ENCODE measurements at regions of chr22 and their contacts with region 1.

Region 1: DNA sequence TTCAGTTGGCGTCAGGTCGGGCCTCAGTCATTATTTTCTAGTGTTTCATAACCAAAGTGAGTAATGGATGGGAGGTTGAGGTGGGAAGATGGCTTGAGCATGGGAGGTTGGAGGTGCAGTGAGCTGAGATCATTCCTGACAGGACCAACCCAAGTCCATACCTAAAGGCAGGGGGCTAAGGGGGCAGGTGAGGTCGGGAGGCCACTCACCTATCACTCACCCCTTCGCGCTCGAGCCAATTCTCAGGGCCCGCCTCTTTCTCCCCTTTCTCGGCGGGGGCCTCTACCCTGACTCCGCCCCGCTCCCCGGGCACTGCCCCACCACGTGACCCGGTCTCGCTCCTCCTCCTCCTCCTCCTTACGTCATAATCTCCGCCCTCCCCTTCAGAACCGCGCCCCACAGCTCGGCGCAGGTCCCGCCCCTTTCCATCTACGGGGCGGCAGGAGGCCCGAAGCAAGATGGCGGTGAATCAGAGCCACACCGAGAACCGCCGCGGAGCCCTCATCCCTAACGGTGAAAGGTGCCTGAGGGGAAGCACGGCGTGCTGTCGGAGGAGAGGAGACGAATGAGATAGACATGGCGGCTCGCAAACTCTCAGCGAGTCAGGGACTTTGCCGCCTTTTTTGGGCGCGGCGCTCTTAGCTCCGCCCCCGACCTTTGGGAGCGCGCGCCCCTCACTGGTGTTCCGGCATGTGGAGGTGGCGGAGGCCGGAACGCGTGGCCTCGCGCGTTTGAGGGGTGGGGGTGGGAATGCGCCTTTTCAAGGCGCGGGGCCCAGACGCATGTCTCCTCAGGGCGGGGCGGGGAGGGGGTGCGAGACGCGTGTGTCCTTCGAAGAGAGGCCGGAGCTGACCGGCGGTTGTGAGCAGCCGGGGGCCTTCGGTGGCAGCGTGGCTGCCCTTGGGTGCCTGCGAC is at the start of gene WBP2NL:
- DNase-seq: peak; percentile 75 to 92 (median 89)
- ATAC-seq: peak; percentile 99
- H3K4me3 ChIP-seq: peak within 1 kb of the TSS; percentile 76
- H3K4me3 Mint-ChIP-seq: peak within 1 kb of the TSS; percentile 91 to 100 (median 96)
- H3K27ac ChIP-seq: peak within 1 kb of the TSS; percentile 73
- H3K27ac Mint-ChIP-seq: peak within 1 kb of the TSS; percentile 91 to 99 (median 96)
- H3K4me1 ChIP-seq: peaks cover 6 to 7% of the 10 kb centered on the region in 2 donors
- H3K4me1 Mint-ChIP-seq: peaks cover 12 to 31% (median 22%) of the 10 kb centered on the region in 7 donors
- H3K27me3 ChIP-seq: no peaks in the 10 kb centered on the region
- H3K27me3 Mint-ChIP-seq: peaks cover 0 to 9% (median 0%) of the 10 kb centered on the region in 5 donors
- total RNA-seq, gene WBP2NL: 0.85 to 5.7 (median 3.2) TPM

Region 2: GRCh38 chr22:41946629-41947423 is 51.8 kb before region 1 on chr22 and contains the start of gene CENPM:
- CTCF ChIA-PET with region 1: interaction called, 3 read pairs
- POLR2A ChIA-PET with region 1: interaction called, 3 read pairs
- intact Hi-C with region 1: loop called in 1 of 2 experiments (anchors 2 kb)
- DNase-seq: peak; percentile 71 to 94 (median 84)
- ATAC-seq: peak; percentile 97
- H3K4me3 ChIP-seq: peak within 1 kb of the TSS; percentile 82
- H3K4me3 Mint-ChIP-seq: peak within 1 kb of the TSS; percentile 83 to 93 (median 91)
- H3K27ac ChIP-seq: peak within 1 kb of the TSS; percentile 37
- H3K27ac Mint-ChIP-seq: peak within 1 kb of the TSS in 7 of 9 donors; percentile 63 to 93 (median 68)
- H3K4me1 ChIP-seq: peaks cover 3 to 13% of the 10 kb centered on the region in 2 donors
- H3K4me1 Mint-ChIP-seq: peaks cover 0 to 41% (median 10%) of the 10 kb centered on the region in 7 donors
- H3K27me3 ChIP-seq: no peaks in the 10 kb centered on the region
- H3K27me3 Mint-ChIP-seq: no peaks in the 10 kb centered on the region
- total RNA-seq, gene CENPM: 5.1 to 51.1 (median 10.8) TPM

Region 3: GRCh38 chr22:41976401-41976901 is 22.2 kb before region 1 on chr22:
- CTCF ChIA-PET with region 1: no interaction called
- POLR2A ChIA-PET with region 1: no interaction called
- intact Hi-C with region 1: loop called in 1 of 2 experiments (anchors 2 kb)
- DNase-seq: peak in 6 of 9 donors; percentile 18 to 80 (median 34)
- ATAC-seq: peak; percentile 83
- H3K4me3 ChIP-seq: peak overlapping the region; percentile 33
- H3K4me3 Mint-ChIP-seq: peak overlapping the region; percentile 57 to 81 (median 76)
- H3K27ac ChIP-seq: no peak overlapping the region
- H3K27ac Mint-ChIP-seq: no peak overlapping the region
- H3K4me1 ChIP-seq: peaks cover 0 to 3% of the 10 kb centered on the region in 2 donors
- H3K4me1 Mint-ChIP-seq: peaks cover 1 to 14% (median 5%) of the 10 kb centered on the region in 7 donors
- H3K27me3 ChIP-seq: no peaks in the 10 kb centered on the region
- H3K27me3 Mint-ChIP-seq: peaks cover 18 to 54% (median 34%) of the 10 kb centered on the region in 5 donors

Region 4: GRCh38 chr22:42033263-42034181 is 34.9 kb after region 1 on chr22:
- CTCF ChIA-PET with region 1: no interaction called
- POLR2A ChIA-PET with region 1: interaction called, 4 read pairs
- intact Hi-C with region 1: loop called in 1 of 2 experiments (anchors 2 kb)
- DNase-seq: no peak
- ATAC-seq: no peak
- H3K4me3 ChIP-seq: no peak overlapping the region
- H3K4me3 Mint-ChIP-seq: no peak overlapping the region
- H3K27ac ChIP-seq: no peak overlapping the region
- H3K27ac Mint-ChIP-seq: peak overlapping the region in 1 of 9 donors; percentile 43
- H3K4me1 ChIP-seq: no peaks in the 10 kb centered on the region
- H3K4me1 Mint-ChIP-seq: peaks cover 0 to 27% (median 0%) of the 10 kb centered on the region in 7 donors
- H3K27me3 ChIP-seq: no peaks in the 10 kb centered on the region
- H3K27me3 Mint-ChIP-seq: peaks cover 0 to 3% (median 0%) of the 10 kb centered on the region in 5 donors

Region 5: DNA sequence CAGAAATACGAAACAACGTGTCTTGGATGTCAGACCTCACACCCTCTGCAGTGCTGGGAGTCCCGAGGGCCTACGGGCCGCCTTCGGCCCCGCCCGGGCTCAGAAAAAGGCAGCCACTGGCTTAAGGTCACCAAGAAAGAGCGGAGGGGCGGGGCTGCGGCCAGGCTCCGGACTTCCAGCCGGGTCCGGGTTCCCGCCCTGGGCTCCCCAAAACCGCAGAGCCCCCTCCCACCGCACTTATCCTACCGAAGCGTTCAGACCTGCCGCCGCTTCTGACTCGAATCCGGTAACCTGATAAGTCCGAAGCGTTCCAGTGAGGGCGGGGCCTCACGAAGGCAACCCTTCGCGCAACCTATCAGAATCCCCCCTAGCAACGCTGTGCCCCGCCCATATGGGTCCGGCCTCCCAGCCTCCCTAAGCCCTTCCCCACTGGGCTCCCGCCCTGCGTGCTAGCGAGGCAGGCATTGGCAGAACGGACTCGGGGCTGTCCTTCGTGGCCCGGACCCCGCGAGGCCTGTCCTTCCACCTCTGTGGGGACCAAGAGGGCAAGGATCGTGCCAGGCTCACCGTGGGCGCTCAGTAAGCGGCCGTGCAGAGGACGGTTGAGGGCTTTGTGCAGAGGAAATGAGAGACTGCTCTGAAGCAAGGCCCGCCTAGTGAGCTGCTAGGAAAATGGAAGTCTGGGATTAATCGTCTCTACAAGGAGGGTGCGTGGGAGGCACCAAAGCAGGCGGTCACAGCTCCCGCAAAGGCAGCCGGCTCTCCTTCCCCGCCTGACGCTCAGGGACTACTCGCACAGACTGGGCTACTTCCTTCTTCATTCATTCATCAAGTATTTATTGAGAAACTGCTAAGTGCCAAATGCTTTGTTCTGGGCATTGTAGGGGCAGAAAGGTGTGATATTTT is 72.2 kb after region 1 on chr22 and contains the start of gene NAGA:
- CTCF ChIA-PET with region 1: no interaction called
- POLR2A ChIA-PET with region 1: interaction called, 8 read pairs
- intact Hi-C with region 1: loop called (anchors 1 kb)
- DNase-seq: peak; percentile 79 to 91 (median 88)
- ATAC-seq: peak; percentile 99
- H3K4me3 ChIP-seq: peak within 1 kb of the TSS; percentile 75
- H3K4me3 Mint-ChIP-seq: peak within 1 kb of the TSS; percentile 86 to 96 (median 94)
- H3K27ac ChIP-seq: peak within 1 kb of the TSS; percentile 75
- H3K27ac Mint-ChIP-seq: peak within 1 kb of the TSS; percentile 81 to 94 (median 92)
- H3K4me1 ChIP-seq: peaks cover 16 to 22% of the 10 kb centered on the region in 2 donors
- H3K4me1 Mint-ChIP-seq: peaks cover 22 to 54% (median 45%) of the 10 kb centered on the region in 7 donors
- H3K27me3 ChIP-seq: no peaks in the 10 kb centered on the region
- H3K27me3 Mint-ChIP-seq: no peaks in the 10 kb centered on the region
- total RNA-seq, gene NAGA: 7.6 to 38.8 (median 9.4) TPM

Region 6: GRCh38 chr22:42079319-42080251 is 81.0 kb after region 1 on chr22 and contains the start of gene SMDT1:
- CTCF ChIA-PET with region 1: no interaction called
- POLR2A ChIA-PET with region 1: interaction called, 7 read pairs
- intact Hi-C with region 1: loop called (anchors 1 kb)
- DNase-seq: peak; percentile 96 to 100 (median 99)
- ATAC-seq: peak; percentile 94
- H3K4me3 ChIP-seq: peak within 1 kb of the TSS; percentile 98
- H3K4me3 Mint-ChIP-seq: peak within 1 kb of the TSS; percentile 94 to 99 (median 96)
- H3K27ac ChIP-seq: peak within 1 kb of the TSS; percentile 97
- H3K27ac Mint-ChIP-seq: peak within 1 kb of the TSS; percentile 96 to 99 (median 99)
- H3K4me1 ChIP-seq: peaks cover 10 to 16% of the 10 kb centered on the region in 2 donors
- H3K4me1 Mint-ChIP-seq: peaks cover 9 to 52% (median 43%) of the 10 kb centered on the region in 7 donors
- H3K27me3 ChIP-seq: no peaks in the 10 kb centered on the region
- H3K27me3 Mint-ChIP-seq: no peaks in the 10 kb centered on the region
- total RNA-seq, gene SMDT1: 40.4 to 105 (median 98.8) TPM

Measured in naive thymus-derived CD4-positive, alpha-beta T cell (primary cell).